Activated CD4-positive, alpha-beta T cell treated with anti-CD3 and anti-CD28 coated beads for 36 hours (primary cell): ENCODE measurements at regions of chr14 and their contacts with region 1.

Region 1: DNA sequence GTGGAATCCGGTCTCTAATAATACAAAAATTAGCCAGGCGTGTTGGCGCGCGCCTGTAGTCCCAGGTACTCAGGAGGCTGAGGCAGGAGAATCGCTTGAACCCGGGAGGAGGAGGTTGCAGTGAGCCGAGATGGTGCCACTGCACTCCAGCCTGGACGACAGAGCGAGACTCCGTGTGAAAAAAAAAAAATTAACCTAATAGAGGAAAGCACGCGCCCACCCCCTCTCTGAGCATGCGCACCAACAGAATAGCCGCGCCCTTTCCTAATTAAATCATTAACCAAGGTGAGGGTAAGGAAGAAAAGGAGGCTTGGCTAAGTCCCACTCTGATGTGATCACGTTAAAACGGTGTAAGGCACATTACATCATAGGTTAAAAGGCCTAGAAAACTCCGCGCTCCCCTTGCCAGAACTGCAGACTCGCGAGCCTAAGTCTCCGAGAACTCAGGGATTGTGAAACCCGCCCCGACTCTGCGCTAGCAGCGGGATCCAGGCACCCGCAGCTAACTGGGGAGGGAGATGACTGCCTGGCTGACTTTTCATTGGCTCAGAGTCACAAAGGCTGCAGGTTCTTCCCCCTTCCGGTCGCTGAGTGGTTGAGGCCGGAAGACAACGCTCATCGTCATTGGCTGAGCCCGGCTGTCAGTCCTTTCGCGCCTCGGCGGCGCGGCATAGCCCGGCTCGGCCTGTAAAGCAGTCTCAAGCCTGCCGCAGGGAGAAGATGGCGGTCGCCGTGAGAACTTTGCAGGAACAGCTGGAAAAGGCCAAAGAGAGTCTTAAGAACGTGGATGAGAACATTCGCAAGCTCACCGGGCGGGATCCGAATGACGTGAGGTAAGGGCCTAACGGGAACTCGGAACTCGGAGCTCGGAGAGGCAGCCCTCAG is at the start of gene PNN:
- DNase-seq: peak; percentile 97
- ATAC-seq: peak; percentile 91
- H3K4me3 Mint-ChIP-seq: peak within 1 kb of the TSS; percentile 96
- H3K27ac Mint-ChIP-seq: peak within 1 kb of the TSS; percentile 99
- H3K4me1 Mint-ChIP-seq: peaks cover 40% of the 10 kb centered on the region
- H3K27me3 Mint-ChIP-seq: no peaks in the 10 kb centered on the region
- total RNA-seq, gene PNN: 87.8 to 98.3 TPM

Region 2: GRCh38 chr14:38848243-38848935 is 326.4 kb before region 1 on chr14:
- CTCF ChIA-PET with region 1: no interaction called
- POLR2A ChIA-PET with region 1: no interaction called
- intact Hi-C with region 1: no loop called
- DNase-seq: no peak
- ATAC-seq: no peak
- H3K4me3 Mint-ChIP-seq: no peak overlapping the region
- H3K27ac Mint-ChIP-seq: no peak overlapping the region
- H3K4me1 Mint-ChIP-seq: no peaks in the 10 kb centered on the region
- H3K27me3 Mint-ChIP-seq: no peaks in the 10 kb centered on the region

Region 3: DNA sequence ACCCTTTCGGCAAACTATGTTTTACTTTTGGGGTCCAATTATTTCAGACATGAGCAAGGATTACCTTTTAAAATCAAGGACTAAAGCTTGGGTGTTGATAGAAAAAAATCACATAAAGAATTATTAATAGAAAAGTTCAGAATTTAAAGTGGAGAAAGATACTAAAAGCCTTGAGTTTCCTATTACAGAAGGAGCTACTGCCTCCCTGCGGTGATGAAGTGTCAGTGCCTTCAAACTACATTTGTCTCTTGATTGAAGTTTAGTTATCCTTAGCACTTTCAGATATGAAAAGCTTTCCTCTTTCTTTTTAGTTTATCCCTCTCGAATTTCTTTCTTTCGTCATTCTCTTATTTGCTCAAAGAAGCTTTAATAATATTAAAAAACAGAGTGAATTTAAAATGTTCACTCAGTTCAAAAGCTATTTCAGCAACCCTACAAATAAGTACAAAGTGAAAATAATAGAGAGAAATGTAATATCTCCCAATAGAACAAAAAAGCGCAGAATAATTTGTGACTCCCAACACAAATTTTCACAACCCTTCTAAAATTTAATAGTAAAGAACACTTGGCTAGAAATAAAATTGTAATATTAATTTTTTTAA is 159.3 kb before region 1 on chr14:
- CTCF ChIA-PET with region 1: no interaction called
- POLR2A ChIA-PET with region 1: no interaction called
- intact Hi-C with region 1: no loop called
- DNase-seq: peak; percentile 37
- ATAC-seq: no peak
- H3K4me3 Mint-ChIP-seq: no peak overlapping the region
- H3K27ac Mint-ChIP-seq: no peak overlapping the region
- H3K4me1 Mint-ChIP-seq: no peaks in the 10 kb centered on the region
- H3K27me3 Mint-ChIP-seq: no peaks in the 10 kb centered on the region

Region 4: GRCh38 chr14:39266871-39267591 is 92.2 kb after region 1 on chr14:
- CTCF ChIA-PET with region 1: interaction called, 4 read pairs
- POLR2A ChIA-PET with region 1: interaction called, 6 read pairs
- intact Hi-C with region 1: loop called (anchors 1 kb)
- DNase-seq: peak; percentile 77
- ATAC-seq: peak; percentile 63
- H3K4me3 Mint-ChIP-seq: peak overlapping the region; percentile 73
- H3K27ac Mint-ChIP-seq: peak overlapping the region; percentile 95
- H3K4me1 Mint-ChIP-seq: peaks cover 50% of the 10 kb centered on the region
- H3K27me3 Mint-ChIP-seq: no peaks in the 10 kb centered on the region

Region 5: GRCh38 chr14:39368261-39368959 is 193.6 kb after region 1 on chr14:
- CTCF ChIA-PET with region 1: no interaction called
- POLR2A ChIA-PET with region 1: no interaction called
- intact Hi-C with region 1: loop called in 1 of 2 experiments (anchors 5 kb)
- DNase-seq: peak; percentile 64
- ATAC-seq: no peak
- H3K4me3 Mint-ChIP-seq: no peak overlapping the region
- H3K27ac Mint-ChIP-seq: no peak overlapping the region
- H3K4me1 Mint-ChIP-seq: no peaks in the 10 kb centered on the region
- H3K27me3 Mint-ChIP-seq: no peaks in the 10 kb centered on the region